CD8-positive, alpha-beta T cell (primary cell): ENCODE measurements at regions of chr9 and their contacts with region 1.

Region 1: DNA sequence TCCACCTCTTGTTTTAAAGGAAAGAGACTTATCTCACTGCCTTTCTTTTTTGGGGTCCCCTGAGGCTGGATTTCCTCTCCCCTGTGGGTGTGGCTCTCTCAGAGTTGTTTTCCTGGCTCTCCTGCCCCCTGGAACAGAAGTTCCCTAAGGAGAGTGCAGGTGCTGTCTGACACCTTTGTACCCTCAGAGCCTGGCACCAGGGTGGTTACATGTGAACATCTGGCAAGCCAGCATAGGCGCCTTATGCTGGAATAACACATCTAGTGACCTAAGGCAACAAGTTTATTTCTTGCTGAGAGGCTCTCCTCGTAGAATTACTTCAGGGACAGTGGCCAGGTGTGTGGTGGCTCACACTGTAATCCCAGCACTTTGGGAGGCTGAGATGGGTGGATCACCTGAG is 172.9 kb upstream of the PTCH1 start:
- DNase-seq: no peak
- ATAC-seq: no peak
- H3K4me3 ChIP-seq: no peak overlapping the region
- H3K4me3 Mint-ChIP-seq: no peak overlapping the region
- H3K27ac ChIP-seq: no peak overlapping the region
- H3K27ac Mint-ChIP-seq: no peak overlapping the region
- H3K4me1 ChIP-seq: no peaks in the 10 kb centered on the region
- H3K4me1 Mint-ChIP-seq: no peaks in the 10 kb centered on the region
- H3K27me3 ChIP-seq: no peaks in the 10 kb centered on the region
- H3K27me3 Mint-ChIP-seq: no peaks in the 10 kb centered on the region
- CTCF ChIP-seq: no peak

Region 2: GRCh38 chr9:93974151-93974550 is 1715.5 kb before region 1 on chr9:
- CTCF ChIA-PET with region 1: no interaction called
- POLR2A ChIA-PET with region 1: no interaction called
- intact Hi-C with region 1: loop called in 1 of 2 experiments (anchors 5 kb)
- DNase-seq: no peak
- ATAC-seq: no peak
- H3K4me3 ChIP-seq: no peak overlapping the region
- H3K4me3 Mint-ChIP-seq: no peak overlapping the region
- H3K27ac ChIP-seq: no peak overlapping the region
- H3K27ac Mint-ChIP-seq: no peak overlapping the region
- H3K4me1 ChIP-seq: no peaks in the 10 kb centered on the region
- H3K4me1 Mint-ChIP-seq: no peaks in the 10 kb centered on the region
- H3K27me3 ChIP-seq: no peaks in the 10 kb centered on the region
- H3K27me3 Mint-ChIP-seq: peaks cover 16% of the 10 kb centered on the region
- CTCF ChIP-seq: no peak